HCT116 (cell line): ENCODE measurements at regions of chr12 and their contacts with region 1.

Region 1: DNA sequence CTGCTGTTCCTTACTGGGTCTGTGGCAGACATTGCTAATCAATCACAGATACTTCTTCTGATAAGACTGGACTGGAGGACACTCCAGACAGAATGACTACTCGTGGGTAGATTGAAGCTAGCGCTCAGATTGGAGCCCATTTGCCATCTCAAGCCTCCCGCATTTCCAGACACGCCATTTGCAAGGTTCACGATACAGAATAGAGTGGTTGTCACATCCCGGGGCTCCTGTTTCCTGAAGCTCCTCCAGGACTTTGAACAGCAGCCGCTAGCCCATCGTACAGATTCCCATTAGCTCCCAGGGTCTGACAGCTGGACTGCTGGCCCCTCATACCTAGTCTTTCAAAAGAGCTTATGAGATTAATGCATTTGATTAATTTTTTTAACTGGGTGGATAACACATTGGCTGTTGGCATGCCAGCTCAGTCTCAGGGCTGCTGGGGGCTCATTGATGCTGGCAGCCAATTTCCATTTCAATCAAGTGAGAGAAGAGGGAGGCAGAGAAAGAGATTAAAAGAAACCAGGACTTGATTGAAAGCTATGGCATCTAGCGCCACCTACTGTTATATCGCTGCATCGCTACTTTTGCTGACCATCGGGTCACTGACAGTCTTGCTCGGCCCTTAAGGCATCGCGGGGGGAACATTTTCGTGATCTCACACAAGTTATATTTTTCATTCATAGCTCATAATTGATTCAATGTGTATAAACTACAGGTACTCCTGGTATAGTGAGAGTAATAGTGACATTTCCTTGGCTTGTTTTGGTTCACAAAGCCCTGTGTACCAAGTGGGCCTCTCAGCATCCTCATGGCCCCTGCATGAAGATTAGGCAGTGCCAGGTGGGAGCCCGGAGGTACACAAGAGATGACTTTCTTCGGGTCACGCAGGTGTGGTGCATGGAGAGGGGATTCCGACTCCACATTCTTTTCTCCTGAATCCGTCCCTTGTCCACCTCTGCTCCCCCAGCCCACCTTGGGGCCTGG is 78.6 kb downstream of the CCDC60 start:
- DNase-seq: peak; percentile 56
- ATAC-seq: peak; percentile 86
- H3K4me3 ChIP-seq: no peak overlapping the region
- H3K27ac ChIP-seq: no peak overlapping the region
- H3K4me1 ChIP-seq: no peaks in the 10 kb centered on the region
- H3K27me3 ChIP-seq: peaks cover 35% of the 10 kb centered on the region; the same call in 1 of the 2 replicates
- CTCF ChIP-seq: peak; percentile 74 to 90 (median 83)
- POLR2A ChIP-seq: no peak
- RAD21 ChIP-seq: peak; percentile 89

Region 2: DNA sequence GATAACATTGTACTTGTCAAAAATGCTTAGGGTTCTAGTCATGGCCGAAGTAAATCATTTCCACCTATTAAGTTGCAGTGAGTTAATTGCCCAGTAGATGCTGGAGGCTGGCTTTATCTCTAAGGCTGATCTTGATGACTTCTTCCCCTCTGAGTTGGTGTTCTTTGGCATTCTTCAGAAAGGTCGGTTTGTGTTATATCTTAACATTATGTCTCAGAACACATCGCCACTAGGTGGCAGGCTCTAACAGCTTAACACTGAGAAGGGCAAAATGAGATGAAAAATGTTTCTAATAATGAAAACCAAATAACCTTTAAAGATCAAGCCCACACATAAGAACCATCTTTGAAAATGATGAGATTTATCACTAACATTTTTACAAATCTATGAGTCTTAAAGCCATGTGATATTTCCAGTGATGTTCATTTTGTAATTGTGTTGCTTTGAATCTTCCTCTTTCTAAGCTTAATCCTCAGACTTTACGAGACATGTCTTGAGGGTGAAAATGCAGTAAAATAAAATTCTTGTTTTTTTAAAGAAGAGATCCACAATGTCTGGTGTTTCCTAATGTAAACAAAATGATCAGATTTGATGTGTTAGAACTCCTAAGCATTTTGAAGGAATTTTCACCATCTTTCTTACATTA is 1008.1 kb before region 1 on chr12:
- CTCF ChIA-PET with region 1: no interaction called
- POLR2A ChIA-PET with region 1: no interaction called
- RAD21 ChIA-PET with region 1: no interaction called
- intact Hi-C with region 1: loop called (anchors 2 kb)
- DNase-seq: peak; percentile 37
- ATAC-seq: peak; percentile 84
- H3K4me3 ChIP-seq: no peak overlapping the region
- H3K27ac ChIP-seq: no peak overlapping the region
- H3K4me1 ChIP-seq: no peaks in the 10 kb centered on the region
- H3K27me3 ChIP-seq: no peaks in the 10 kb centered on the region
- CTCF ChIP-seq: peak; percentile 57 to 90 (median 62)
- POLR2A ChIP-seq: no peak
- RAD21 ChIP-seq: peak; percentile 80

Region 3: DNA sequence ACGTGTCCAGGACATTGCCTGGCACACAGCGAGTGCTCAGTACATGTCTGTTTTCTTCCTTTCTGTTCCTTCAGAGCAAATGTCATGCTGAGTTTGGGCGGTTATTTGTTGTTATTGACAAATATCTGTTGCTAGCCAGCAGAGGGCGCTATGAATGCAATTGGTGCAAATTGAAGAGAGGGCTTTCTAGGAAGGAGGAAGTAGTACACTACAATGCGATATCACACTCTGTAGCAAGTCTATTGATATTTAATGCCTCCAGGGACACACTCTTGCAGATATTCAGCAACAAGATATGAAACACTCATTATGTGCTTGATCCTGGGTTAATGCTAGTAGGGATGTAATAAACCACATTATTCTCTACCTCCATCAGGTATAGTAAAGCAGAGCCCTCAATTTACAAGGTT is 699.0 kb before region 1 on chr12:
- CTCF ChIA-PET with region 1: no interaction called
- POLR2A ChIA-PET with region 1: no interaction called
- RAD21 ChIA-PET with region 1: no interaction called
- intact Hi-C with region 1: loop called (anchors 1 kb)
- DNase-seq: peak; percentile 34
- ATAC-seq: peak; percentile 80
- H3K4me3 ChIP-seq: no peak overlapping the region
- H3K27ac ChIP-seq: no peak overlapping the region
- H3K4me1 ChIP-seq: no peaks in the 10 kb centered on the region
- H3K27me3 ChIP-seq: no peaks in the 10 kb centered on the region
- CTCF ChIP-seq: peak; percentile 62 to 81 (median 68)
- POLR2A ChIP-seq: no peak
- RAD21 ChIP-seq: peak; percentile 60

Region 4: GRCh38 chr12:118979763-118980406 is 433.2 kb before region 1 on chr12:
- CTCF ChIA-PET with region 1: interaction called, 4 read pairs
- POLR2A ChIA-PET with region 1: no interaction called
- RAD21 ChIA-PET with region 1: no interaction called
- intact Hi-C with region 1: loop called (anchors 1 kb)
- DNase-seq: peak; percentile 42
- ATAC-seq: peak; percentile 89
- H3K4me3 ChIP-seq: no peak overlapping the region
- H3K27ac ChIP-seq: no peak overlapping the region
- H3K4me1 ChIP-seq: no peaks in the 10 kb centered on the region
- H3K27me3 ChIP-seq: peaks cover 23% of the 10 kb centered on the region; the same call in 1 of the 2 replicates
- CTCF ChIP-seq: peak; percentile 56 to 92 (median 82)
- POLR2A ChIP-seq: no peak
- RAD21 ChIP-seq: peak; percentile 58

Region 5: DNA sequence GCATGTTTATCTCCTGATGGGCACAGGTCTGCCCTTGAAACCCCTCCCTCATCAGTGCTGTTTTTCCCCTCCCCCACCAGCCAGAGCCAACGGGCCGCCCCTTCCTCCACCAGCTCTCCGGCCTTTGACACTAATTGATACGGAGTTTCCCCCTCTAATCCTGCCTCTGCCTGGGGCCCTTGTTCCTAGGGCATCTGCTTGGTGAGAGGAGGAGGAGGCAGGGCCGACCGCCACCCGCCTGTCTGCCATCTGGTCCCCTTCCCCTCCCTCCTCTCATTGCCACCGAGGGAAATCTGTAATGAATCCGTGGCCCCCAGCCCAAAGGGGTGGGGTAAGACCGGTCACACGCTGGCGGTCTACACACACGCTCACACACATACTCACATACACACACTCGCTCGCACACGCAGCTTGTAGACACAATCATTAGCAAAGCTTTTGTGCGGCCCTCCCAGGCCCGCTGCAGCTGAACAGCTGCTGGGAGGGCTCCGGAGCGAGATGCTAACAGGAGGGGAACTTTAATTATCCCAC is 404.3 kb before region 1 on chr12:
- CTCF ChIA-PET with region 1: no interaction called
- POLR2A ChIA-PET with region 1: no interaction called
- RAD21 ChIA-PET with region 1: no interaction called
- intact Hi-C with region 1: no loop called
- DNase-seq: no peak
- ATAC-seq: no peak
- H3K4me3 ChIP-seq: no peak overlapping the region
- H3K27ac ChIP-seq: no peak overlapping the region
- H3K4me1 ChIP-seq: no peaks in the 10 kb centered on the region
- H3K27me3 ChIP-seq: no peaks in the 10 kb centered on the region
- CTCF ChIP-seq: no peak
- POLR2A ChIP-seq: no peak
- RAD21 ChIP-seq: no peak

Region 6: GRCh38 chr12:119020406-119021360 is 392.4 kb before region 1 on chr12:
- CTCF ChIA-PET with region 1: interaction called, 3 read pairs
- POLR2A ChIA-PET with region 1: no interaction called
- RAD21 ChIA-PET with region 1: no interaction called
- intact Hi-C with region 1: loop called (anchors 1 kb)
- DNase-seq: peak; percentile 36
- ATAC-seq: peak; percentile 99
- H3K4me3 ChIP-seq: no peak overlapping the region
- H3K27ac ChIP-seq: no peak overlapping the region
- H3K4me1 ChIP-seq: no peaks in the 10 kb centered on the region
- H3K27me3 ChIP-seq: peaks cover 24% of the 10 kb centered on the region; the same call in 1 of the 2 replicates
- CTCF ChIP-seq: peak; percentile 92 to 98 (median 96)
- POLR2A ChIP-seq: no peak
- RAD21 ChIP-seq: peak; percentile 51

Region 7: GRCh38 chr12:119115296-119115905 is 297.7 kb before region 1 on chr12:
- CTCF ChIA-PET with region 1: interaction called, 4 read pairs
- POLR2A ChIA-PET with region 1: no interaction called
- RAD21 ChIA-PET with region 1: no interaction called
- intact Hi-C with region 1: loop called (anchors 1 kb)
- DNase-seq: peak; percentile 41
- ATAC-seq: peak; percentile 79
- H3K4me3 ChIP-seq: no peak overlapping the region
- H3K27ac ChIP-seq: no peak overlapping the region
- H3K4me1 ChIP-seq: no peaks in the 10 kb centered on the region
- H3K27me3 ChIP-seq: peaks cover 13% of the 10 kb centered on the region
- CTCF ChIP-seq: peak; percentile 77 to 84 (median 83); a peak in 5 of 6 replicates
- POLR2A ChIP-seq: no peak
- RAD21 ChIP-seq: peak; percentile 84

Region 8: GRCh38 chr12:119354179-119354953 is 58.7 kb before region 1 on chr12:
- CTCF ChIA-PET with region 1: no interaction called
- POLR2A ChIA-PET with region 1: no interaction called
- RAD21 ChIA-PET with region 1: no interaction called
- intact Hi-C with region 1: no loop called
- DNase-seq: no peak
- ATAC-seq: no peak
- H3K4me3 ChIP-seq: no peak overlapping the region
- H3K27ac ChIP-seq: no peak overlapping the region
- H3K4me1 ChIP-seq: no peaks in the 10 kb centered on the region
- H3K27me3 ChIP-seq: peaks cover 20% of the 10 kb centered on the region
- CTCF ChIP-seq: no peak
- POLR2A ChIP-seq: no peak
- RAD21 ChIP-seq: no peak

Region 9: DNA sequence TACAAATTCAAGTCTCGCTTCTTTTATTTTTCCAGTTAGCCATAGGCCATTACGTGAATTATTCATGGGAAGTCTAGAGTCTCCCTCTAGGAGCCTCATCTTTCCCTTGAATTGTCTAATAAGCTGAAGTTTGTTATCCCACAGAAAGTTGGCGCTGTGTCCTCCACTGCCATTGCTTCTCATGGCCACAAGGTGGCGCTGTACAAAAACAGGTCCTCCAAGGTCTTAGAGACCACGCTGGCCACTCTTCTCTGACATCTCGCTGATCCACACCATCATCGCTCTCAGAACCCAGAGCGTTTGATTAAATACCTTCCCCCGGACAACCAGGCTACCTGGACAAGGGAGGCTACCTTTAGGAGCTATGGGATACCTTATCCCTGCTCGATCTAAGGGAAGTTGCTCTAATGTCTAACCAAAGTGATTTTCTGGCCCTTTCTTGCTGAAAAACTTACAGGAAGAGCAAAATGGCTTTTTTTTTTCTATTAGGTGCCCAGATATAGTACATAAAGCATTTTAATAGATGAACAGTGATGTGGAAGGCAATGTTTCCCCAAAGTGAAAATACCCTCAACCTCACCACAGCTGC is 31.4 kb after region 1 on chr12:
- CTCF ChIA-PET with region 1: interaction called, 12 read pairs
- POLR2A ChIA-PET with region 1: no interaction called
- RAD21 ChIA-PET with region 1: no interaction called
- intact Hi-C with region 1: no loop called
- DNase-seq: peak; percentile 85
- ATAC-seq: peak; percentile 99
- H3K4me3 ChIP-seq: peak overlapping the region; percentile 19 to 35; a peak in 3 of 4 replicates
- H3K27ac ChIP-seq: no peak overlapping the region
- H3K4me1 ChIP-seq: peaks cover 0 to 4% of the 10 kb centered on the region in 2 experiments; a peak in 2 of 4 replicates
- H3K27me3 ChIP-seq: peaks cover 18% of the 10 kb centered on the region
- CTCF ChIP-seq: peak; percentile 99 to 100 (median 100)
- POLR2A ChIP-seq: no peak
- RAD21 ChIP-seq: peak; percentile 68

Region 10: DNA sequence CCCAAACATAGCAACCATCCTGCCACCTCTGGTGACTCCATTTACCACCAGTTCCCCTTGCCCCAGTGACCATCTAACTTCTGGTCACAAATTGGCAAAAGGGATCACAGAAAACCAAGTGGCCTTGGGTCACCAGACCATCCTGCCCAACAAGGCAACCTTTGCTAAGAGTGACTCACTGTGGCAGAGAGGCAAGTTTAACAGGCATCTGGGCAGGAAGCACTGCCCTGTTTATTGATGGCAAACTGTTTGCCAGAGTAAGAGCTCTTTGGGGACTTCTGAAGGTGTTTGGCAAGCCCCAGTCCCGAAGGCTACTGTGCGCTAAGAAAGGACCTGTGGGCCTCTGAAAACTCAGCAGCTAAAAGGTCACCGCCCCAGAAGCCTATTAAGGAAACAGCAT is 152.3 kb after region 1 on chr12:
- CTCF ChIA-PET with region 1: no interaction called
- POLR2A ChIA-PET with region 1: no interaction called
- RAD21 ChIA-PET with region 1: no interaction called
- intact Hi-C with region 1: no loop called
- DNase-seq: no peak
- ATAC-seq: no peak; the same call in 1 of the 2 replicates
- H3K4me3 ChIP-seq: no peak overlapping the region
- H3K27ac ChIP-seq: no peak overlapping the region
- H3K4me1 ChIP-seq: no peaks in the 10 kb centered on the region
- H3K27me3 ChIP-seq: no peaks in the 10 kb centered on the region
- CTCF ChIP-seq: no peak
- POLR2A ChIP-seq: no peak
- RAD21 ChIP-seq: no peak